ENCODE measurements at regions of chr21 and their contacts with region 1.

Region 1: DNA sequence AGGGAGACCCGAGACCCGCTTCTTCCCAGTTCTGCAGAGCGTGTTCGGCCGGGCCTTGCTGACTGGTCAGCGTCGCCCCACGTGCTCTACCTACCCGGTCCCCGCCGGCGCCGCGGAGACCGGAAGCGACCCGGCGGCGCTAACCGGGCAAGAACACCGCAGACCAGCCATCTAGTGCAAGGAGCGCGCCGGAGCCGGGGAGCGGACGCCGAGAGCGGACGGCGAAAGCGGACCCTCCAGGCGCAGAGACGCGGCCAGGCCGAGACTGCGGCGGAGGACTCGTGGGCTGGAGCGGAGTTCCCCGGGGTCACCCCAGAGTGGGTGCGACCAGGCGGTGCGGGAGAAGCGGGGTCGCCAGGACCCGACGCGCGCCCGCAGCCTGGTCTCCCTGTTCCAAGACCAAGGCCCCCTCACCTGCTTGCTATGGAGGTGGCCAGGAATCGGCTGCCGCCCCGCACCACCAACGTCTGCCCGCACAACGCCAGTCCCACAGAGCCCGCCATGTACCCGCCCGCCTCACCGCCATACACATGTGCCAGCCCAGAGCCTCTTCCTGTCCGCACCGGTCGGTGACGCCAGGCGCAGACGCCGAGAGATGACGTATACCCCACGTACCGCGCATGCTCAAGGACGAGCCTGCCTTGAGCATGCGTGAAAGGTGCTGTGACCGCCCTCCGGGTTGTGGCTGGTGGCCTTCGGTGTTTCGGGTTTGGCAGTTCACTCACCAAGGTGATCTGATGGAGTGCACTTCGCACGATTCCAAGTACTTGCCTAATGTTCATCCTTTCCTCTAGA is at the start of gene WDR4:
- DNase-seq: peak; percentile 96
- H3K4me3 Mint-ChIP-seq: peak within 1 kb of the TSS; percentile 93
- H3K27ac Mint-ChIP-seq: peak within 1 kb of the TSS; percentile 94
- H3K4me1 Mint-ChIP-seq: peaks cover 10% of the 10 kb centered on the region
- H3K27me3 Mint-ChIP-seq: no peaks in the 10 kb centered on the region
- CTCF ChIP-seq: no peak
- total RNA-seq, gene WDR4: 20.7 and 34.4 TPM in 2 replicates

Region 2: DNA sequence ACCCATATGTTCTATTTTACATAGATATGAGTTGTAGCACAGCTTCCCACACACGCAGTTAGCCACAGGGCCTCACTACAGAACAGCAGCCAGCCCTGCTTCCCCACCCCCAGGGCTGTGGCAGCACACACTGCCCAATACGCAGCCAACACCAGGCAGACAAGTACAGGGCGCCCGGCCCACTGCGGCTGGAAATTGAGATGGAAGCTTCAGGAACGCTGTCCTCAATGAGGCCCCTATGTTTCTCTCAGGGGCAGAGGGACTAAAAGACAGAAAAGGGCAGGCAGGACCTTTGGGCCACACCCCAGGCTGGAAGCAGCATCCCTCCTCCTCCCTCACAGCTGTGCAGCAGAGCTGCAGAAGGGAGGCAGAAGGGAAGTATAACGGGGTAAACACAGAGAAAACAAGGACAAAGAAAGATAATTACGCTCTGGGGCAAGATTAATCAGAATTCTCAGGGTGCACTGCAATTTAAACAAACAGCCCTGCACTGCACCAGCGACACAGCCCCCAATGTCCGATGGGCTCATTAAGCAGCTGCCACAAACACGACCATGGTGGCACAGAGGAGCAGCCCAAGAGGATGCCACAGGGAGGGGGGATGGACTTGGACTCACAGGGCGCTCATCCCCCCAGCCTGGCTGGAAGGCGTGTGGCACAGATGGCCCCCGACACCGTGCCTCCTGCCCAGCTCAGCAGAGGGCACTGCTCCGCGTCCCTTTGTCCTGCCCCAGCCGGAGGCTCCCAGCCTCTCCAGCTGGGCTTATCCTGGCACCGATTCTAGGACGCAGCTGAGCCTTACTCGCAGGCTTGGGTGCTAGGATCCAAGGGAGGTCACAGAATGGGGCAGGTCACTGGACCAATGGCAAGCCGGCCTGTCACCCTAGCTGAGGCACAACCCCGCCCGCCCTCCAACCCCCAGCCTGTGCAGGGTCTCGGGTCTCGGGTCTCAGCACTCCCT is 14.1 kb before region 1 on chr21:
- CTCF ChIA-PET with region 1: no interaction called
- POLR2A ChIA-PET with region 1: interaction called, 12 read pairs
- intact Hi-C with region 1: no loop called
- DNase-seq: no peak
- H3K4me3 Mint-ChIP-seq: no peak overlapping the region
- H3K27ac Mint-ChIP-seq: peak overlapping the region; percentile 61
- H3K4me1 Mint-ChIP-seq: peaks cover 8% of the 10 kb centered on the region
- H3K27me3 Mint-ChIP-seq: no peaks in the 10 kb centered on the region
- CTCF ChIP-seq: no peak

Measured in MCF 10A (cell line).